Activated naive CD4-positive, alpha-beta T cell treated with anti-CD3 and anti-CD28 coated beads for 36 hours (primary cell): ENCODE measurements at regions of chr1 and their contacts with region 1.

Region 1: GRCh38 chr1:200448034-200448762 is 38.4 kb upstream of the ZNF281 start:
- DNase-seq: peak; percentile 23
- H3K4me3 Mint-ChIP-seq: no peak overlapping the region
- H3K27ac Mint-ChIP-seq: peak overlapping the region; percentile 84
- H3K4me1 Mint-ChIP-seq: peaks cover 41% of the 10 kb centered on the region
- H3K27me3 Mint-ChIP-seq: peaks cover 7% of the 10 kb centered on the region

Region 2: GRCh38 chr1:200226268-200226968 is 221.8 kb before region 1 on chr1:
- CTCF ChIA-PET with region 1: no interaction called
- intact Hi-C with region 1: loop called (anchors 5 kb)
- DNase-seq: peak; percentile 70
- H3K4me3 Mint-ChIP-seq: peak overlapping the region; percentile 3
- H3K27ac Mint-ChIP-seq: peak overlapping the region; percentile 64
- H3K4me1 Mint-ChIP-seq: peaks cover 17% of the 10 kb centered on the region
- H3K27me3 Mint-ChIP-seq: peaks cover 4% of the 10 kb centered on the region

Region 3: GRCh38 chr1:200342511-200343311 is 105.5 kb before region 1 on chr1:
- CTCF ChIA-PET with region 1: no interaction called
- intact Hi-C with region 1: no loop called
- DNase-seq: no peak
- H3K4me3 Mint-ChIP-seq: no peak overlapping the region
- H3K27ac Mint-ChIP-seq: no peak overlapping the region
- H3K4me1 Mint-ChIP-seq: peaks cover 6% of the 10 kb centered on the region
- H3K27me3 Mint-ChIP-seq: no peaks in the 10 kb centered on the region

Region 4: DNA sequence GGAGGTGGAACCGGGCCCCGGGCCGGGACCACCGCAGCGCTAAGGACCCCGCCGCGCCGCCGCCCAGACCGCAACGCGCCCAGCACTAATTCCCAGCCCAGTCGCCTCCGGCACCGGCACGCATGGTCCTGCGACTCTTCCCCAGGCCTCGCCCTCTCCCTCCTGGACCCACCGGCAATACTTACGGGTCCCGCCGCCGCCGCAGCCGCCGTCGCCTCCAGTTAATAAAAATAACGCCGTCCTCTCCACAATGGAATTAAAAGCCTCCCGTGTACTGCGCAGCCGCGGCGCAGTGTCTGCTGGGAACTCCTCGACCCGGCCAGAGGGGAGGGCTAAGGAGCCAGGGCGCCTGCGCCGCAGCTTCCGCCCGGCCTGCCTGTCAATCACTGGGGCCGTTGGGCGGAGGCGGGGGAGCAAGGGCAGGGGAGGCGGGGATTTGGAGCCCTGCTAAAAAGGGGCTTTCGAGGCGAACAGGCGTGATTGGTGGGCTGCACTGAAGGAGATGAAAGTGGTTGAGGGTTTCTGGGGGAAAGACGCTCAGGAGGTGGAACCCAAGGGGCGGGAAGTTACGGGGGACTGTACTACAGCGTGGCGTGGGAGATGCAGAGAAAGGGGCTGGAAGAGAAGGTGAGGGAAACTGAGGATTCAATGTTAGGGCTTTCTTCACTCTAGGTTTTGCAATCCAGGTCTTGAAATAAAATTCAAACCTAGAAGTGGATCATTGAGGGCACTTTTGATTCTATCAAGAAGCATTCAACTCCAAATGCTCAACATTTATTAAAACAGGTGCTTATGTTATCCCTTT is 38.2 kb before region 1 on chr1 and contains the start of gene ZNF281:
- CTCF ChIA-PET with region 1: no interaction called
- intact Hi-C with region 1: loop called (anchors 1 kb)
- DNase-seq: peak; percentile 96
- H3K4me3 Mint-ChIP-seq: peak within 1 kb of the TSS; percentile 96
- H3K27ac Mint-ChIP-seq: peak within 1 kb of the TSS; percentile 93
- H3K4me1 Mint-ChIP-seq: peaks cover 48% of the 10 kb centered on the region
- H3K27me3 Mint-ChIP-seq: no peaks in the 10 kb centered on the region
- total RNA-seq, gene ZNF281: 6.4 to 7.5 TPM

Region 5: GRCh38 chr1:200428482-200429205 is 19.6 kb before region 1 on chr1:
- CTCF ChIA-PET with region 1: no interaction called
- intact Hi-C with region 1: no loop called
- DNase-seq: no peak
- H3K4me3 Mint-ChIP-seq: no peak overlapping the region
- H3K27ac Mint-ChIP-seq: no peak overlapping the region
- H3K4me1 Mint-ChIP-seq: peaks cover 8% of the 10 kb centered on the region
- H3K27me3 Mint-ChIP-seq: no peaks in the 10 kb centered on the region

Region 6: GRCh38 chr1:200488375-200489165 is 40.4 kb after region 1 on chr1:
- CTCF ChIA-PET with region 1: no interaction called
- intact Hi-C with region 1: loop called (anchors 1 kb)
- DNase-seq: peak; percentile 63
- H3K4me3 Mint-ChIP-seq: no peak overlapping the region
- H3K27ac Mint-ChIP-seq: no peak overlapping the region
- H3K4me1 Mint-ChIP-seq: peaks cover 8% of the 10 kb centered on the region
- H3K27me3 Mint-ChIP-seq: peaks cover 11% of the 10 kb centered on the region

Region 7: DNA sequence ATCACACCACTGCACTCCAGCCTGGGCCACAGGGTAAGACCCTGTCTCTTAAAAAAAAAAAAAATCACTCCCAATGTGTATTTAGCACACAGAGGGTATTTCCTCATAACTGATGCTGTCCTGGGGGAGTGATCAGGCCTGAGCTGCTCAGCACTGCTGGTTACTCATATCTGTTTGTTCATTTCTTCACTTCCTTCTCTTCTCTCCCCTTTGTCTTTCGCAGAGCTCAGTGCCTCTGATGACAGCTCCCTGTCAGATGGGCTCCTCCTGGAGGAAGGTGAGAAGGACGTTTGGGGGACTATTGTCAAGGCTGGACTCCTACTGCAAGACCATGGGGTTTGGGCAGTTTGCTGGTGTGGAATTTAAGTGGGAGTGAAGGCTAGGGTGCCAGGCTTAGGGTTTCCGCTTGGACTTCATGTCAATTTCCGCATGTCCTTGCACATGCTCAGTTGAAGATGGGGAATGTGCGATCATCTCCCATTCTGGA is 459.5 kb after region 1 on chr1:
- CTCF ChIA-PET with region 1: no interaction called
- intact Hi-C with region 1: loop called (anchors 1 kb)
- DNase-seq: no peak
- H3K4me3 Mint-ChIP-seq: no peak overlapping the region
- H3K27ac Mint-ChIP-seq: no peak overlapping the region
- H3K4me1 Mint-ChIP-seq: peaks cover 12% of the 10 kb centered on the region
- H3K27me3 Mint-ChIP-seq: peaks cover 2% of the 10 kb centered on the region